ENCODE measurements at regions of chr3 and their contacts with region 1.

Region 1: GRCh38 chr3:141279077-141279967 is 47.7 kb downstream of the PXYLP1 start:
- DNase-seq: peak; percentile 37
- H3K4me3 ChIP-seq: no peak overlapping the region
- H3K27ac ChIP-seq: no peak overlapping the region
- H3K4me1 ChIP-seq: peaks cover 38% of the 10 kb centered on the region
- H3K27me3 ChIP-seq: no peaks in the 10 kb centered on the region
- CTCF ChIP-seq: peak; percentile 64 to 72

Region 2: DNA sequence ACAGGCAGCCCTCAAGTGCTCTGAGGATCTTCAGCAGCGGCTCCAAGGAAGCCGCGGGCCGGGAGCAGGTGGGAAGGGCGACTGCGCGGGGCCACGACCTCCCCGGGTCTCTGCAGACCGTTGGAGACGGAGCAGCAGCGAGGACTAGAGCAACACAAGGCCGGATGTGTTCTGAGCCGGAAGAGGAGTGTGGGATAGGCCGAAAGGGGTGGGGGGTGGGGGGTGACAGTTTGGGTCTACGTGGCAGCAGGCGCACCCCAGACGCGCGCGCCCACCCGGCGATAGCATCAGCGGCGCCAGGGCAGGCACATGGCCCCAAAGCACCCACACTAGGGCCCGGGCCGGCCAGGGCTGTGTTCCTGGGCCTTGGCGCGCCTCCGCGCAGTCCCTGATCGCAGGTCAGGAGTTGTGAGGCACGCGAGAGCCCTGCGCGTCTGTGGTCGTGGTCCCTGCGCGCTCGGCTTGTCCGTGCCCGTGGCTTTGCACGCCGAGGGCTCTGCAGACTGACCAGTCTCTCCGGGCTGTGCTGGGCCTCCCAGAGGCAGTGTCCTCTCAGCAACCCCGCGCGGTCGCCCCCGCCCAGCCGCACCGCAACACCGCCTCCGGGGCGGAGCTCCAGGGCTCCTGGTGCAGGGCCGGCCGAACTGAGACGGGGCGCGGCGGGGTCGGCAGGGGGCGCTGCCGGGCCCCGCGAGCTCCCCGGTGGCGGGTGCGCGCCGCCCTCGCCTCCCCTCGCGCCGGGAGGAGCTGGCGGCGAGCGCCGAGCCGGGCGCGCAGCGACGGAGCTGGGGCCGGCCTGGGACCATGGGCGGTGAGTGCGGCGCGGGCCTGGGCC is 48.0 kb before region 1 on chr3 and contains the start of gene PXYLP1:
- CTCF ChIA-PET with region 1: no interaction called
- dilution Hi-C with region 1: no loop called
- in situ Hi-C with region 1: no loop called
- intact Hi-C with region 1: loop called (anchors 1 kb)
- DNase-seq: peak; percentile 78
- H3K4me3 ChIP-seq: peak within 1 kb of the TSS; percentile 38 to 70 (median 61)
- H3K27ac ChIP-seq: no peak within 1 kb of the TSS
- H3K4me1 ChIP-seq: peaks cover 6% of the 10 kb centered on the region
- H3K27me3 ChIP-seq: no peaks in the 10 kb centered on the region
- CTCF ChIP-seq: peak; percentile 51 to 54
- total RNA-seq, gene PXYLP1: 2.5 to 6.3 TPM

Region 3: DNA sequence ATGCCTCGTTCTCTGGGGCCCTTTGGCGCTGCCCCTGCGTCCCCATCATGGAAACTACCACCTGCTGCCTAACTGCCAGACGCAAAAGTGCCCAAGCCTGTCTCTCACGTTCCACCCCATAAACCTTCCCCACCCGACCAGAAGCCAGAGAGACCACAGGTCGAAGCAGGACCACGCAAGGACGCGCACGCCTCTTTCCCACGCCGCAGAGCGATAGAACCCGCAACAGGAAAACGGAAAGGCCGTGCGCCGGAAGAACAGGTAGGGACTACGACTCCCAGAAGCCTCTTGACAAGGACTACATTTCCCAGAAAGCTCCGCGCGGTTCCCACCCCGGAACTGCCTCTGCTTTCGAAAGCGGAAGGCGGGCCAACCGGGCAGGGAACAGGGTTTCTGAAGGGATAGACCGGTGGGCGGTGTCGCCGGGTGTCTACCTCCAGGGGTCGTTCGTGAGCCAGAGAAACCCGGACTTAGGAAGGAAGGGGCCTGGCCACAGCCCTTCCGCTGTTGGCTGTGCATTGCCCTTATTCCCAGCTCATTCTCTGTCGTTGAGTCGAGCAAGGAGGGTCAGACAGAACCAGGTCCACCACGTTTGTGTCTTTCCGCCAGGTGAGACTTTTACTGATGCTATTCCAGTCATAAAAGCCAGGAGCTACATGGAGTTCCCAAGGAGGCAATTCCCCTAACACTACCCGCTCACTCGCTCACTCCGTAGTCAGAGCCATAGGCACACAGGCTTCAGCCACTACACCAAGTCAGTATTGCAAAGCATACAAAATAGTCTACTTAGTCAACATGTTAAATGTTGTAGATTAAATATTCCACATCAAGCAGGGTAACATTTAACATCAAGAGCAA is 32.4 kb after region 1 on chr3:
- CTCF ChIA-PET with region 1: no interaction called
- dilution Hi-C with region 1: no loop called
- in situ Hi-C with region 1: no loop called
- intact Hi-C with region 1: no loop called
- DNase-seq: peak; percentile 94
- H3K4me3 ChIP-seq: peak overlapping the region; percentile 75 to 89 (median 78)
- H3K27ac ChIP-seq: peak overlapping the region; percentile 59
- H3K4me1 ChIP-seq: peaks cover 12% of the 10 kb centered on the region
- H3K27me3 ChIP-seq: no peaks in the 10 kb centered on the region
- CTCF ChIP-seq: peak; percentile 65 to 72

Measured in mammary epithelial cell (primary cell).